ENCODE measurements at regions of chr2 and their contacts with region 1.

Region 1: GRCh38 chr2:215920244-215921100 is 92.9 kb downstream of the MREG start:
- ATAC-seq: peak; percentile 48 to 96 (median 84)
- H3K4me3 ChIP-seq: no peak overlapping the region
- H3K27ac ChIP-seq: no peak overlapping the region
- H3K4me1 ChIP-seq: peaks cover 0 to 4% of the 10 kb centered on the region in 2 donors

Region 2: GRCh38 chr2:215435809-215436704 is 484.4 kb before region 1 on chr2 and contains the start of gene FN1:
- in situ Hi-C with region 1: loop called in 2 of 9 experiments (anchors 25 kb)
- ATAC-seq: peak; percentile 68 to 97 (median 92)
- H3K4me3 ChIP-seq: peak within 1 kb of the TSS; percentile 63 to 90 (median 68)
- H3K27ac ChIP-seq: no peak within 1 kb of the TSS
- H3K4me1 ChIP-seq: peaks cover 0 to 3% of the 10 kb centered on the region in 2 donors
- total RNA-seq, gene FN1: 5.6 to 1,687 (median 166) TPM

Region 3: DNA sequence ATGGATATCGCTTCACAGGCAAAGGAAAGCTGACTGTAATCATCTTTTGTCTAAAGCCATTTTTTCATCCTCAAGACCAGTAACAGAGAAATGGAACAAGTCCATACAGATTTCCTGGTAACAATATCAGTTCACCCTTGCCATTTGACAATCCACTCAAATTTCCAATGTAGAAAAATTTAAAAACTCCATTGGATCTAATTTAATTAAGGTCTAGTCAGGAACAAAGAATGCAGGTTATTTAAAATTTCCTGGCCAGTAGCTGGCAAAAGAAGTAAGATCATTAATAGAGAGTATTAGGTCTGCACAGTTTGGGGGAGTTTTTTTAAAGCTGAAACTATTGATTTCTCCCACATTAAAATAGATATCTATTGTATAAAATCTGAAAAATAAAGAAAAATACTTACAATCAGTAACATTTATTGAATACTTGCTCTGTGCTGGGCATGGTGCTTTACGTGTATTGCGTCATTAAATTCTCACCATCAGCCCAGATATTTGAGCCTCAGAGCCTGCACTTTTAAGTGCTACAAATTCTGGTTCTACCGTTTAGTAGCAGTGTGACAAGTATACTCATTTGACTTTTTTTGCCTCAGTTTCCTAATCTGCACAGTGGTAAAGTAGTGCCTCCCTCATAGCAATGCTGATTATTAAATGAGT is 533.6 kb after region 1 on chr2:
- in situ Hi-C with region 1: no loop called
- ATAC-seq: no peak
- H3K4me3 ChIP-seq: no peak overlapping the region
- H3K27ac ChIP-seq: no peak overlapping the region
- H3K4me1 ChIP-seq: no peaks in the 10 kb centered on the region

Measured in motor neuron (in vitro differentiated cells).